MCF 10A (cell line): ENCODE measurements at regions of chr1 and their contacts with region 1.

Region 1: DNA sequence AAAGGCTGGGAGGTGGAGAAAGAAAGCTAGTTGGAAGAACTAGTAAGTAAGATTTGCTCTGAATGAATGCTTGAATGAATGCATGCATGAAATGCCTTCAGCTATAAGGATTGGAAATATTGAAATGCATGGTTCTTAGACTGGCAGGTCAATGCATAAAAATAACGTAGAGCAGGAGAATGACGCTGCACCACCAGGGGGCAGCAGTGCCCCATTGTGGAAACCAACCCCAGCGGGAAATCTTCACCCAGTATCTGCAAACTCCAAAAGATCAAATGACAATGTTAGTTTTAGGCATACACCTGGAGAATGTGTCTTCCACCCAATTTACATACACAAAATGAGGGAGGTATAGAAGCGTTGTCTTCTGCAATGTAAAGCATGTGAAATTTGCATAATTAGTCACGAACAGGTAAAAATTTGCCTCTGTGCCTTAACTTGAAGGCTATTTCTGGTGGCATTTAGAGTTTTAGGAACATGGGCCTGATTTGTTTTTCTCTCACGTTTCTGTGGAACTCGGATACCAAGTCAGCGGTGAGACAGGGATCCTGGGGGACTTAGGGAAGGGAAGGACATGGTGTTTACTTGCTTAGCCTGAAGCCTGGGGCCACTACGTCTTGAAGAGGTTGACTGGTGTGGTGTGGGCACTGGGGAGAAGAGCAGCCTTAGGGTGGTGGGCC is 78.6 kb downstream of the HHAT start:
- DNase-seq: peak; percentile 84
- H3K4me3 Mint-ChIP-seq: no peak overlapping the region
- H3K27ac Mint-ChIP-seq: no peak overlapping the region
- H3K4me1 Mint-ChIP-seq: no peaks in the 10 kb centered on the region
- H3K27me3 Mint-ChIP-seq: no peaks in the 10 kb centered on the region
- CTCF ChIP-seq: peak; percentile 100

Region 2: GRCh38 chr1:210117198-210117597 is 290.1 kb before region 1 on chr1:
- CTCF ChIA-PET with region 1: no interaction called
- POLR2A ChIA-PET with region 1: no interaction called
- intact Hi-C with region 1: no loop called
- DNase-seq: no peak
- H3K4me3 Mint-ChIP-seq: no peak overlapping the region
- H3K27ac Mint-ChIP-seq: no peak overlapping the region
- H3K4me1 Mint-ChIP-seq: no peaks in the 10 kb centered on the region
- H3K27me3 Mint-ChIP-seq: no peaks in the 10 kb centered on the region
- CTCF ChIP-seq: no peak

Region 3: GRCh38 chr1:210328746-210329503 is 78.4 kb before region 1 on chr1 and contains the start of gene HHAT:
- CTCF ChIA-PET with region 1: interaction called, 16 read pairs
- POLR2A ChIA-PET with region 1: interaction called, 3 read pairs
- intact Hi-C with region 1: no loop called
- DNase-seq: peak; percentile 95
- H3K4me3 Mint-ChIP-seq: peak within 1 kb of the TSS; percentile 81
- H3K27ac Mint-ChIP-seq: peak within 1 kb of the TSS; percentile 87
- H3K4me1 Mint-ChIP-seq: peaks cover 26% of the 10 kb centered on the region
- H3K27me3 Mint-ChIP-seq: no peaks in the 10 kb centered on the region
- CTCF ChIP-seq: no peak
- total RNA-seq, gene HHAT: 4.6 and 4.9 TPM in 2 replicates

Region 4: GRCh38 chr1:210342986-210343780 is 64.2 kb before region 1 on chr1:
- CTCF ChIA-PET with region 1: interaction called, 10 read pairs
- POLR2A ChIA-PET with region 1: no interaction called
- intact Hi-C with region 1: no loop called
- DNase-seq: peak; percentile 33
- H3K4me3 Mint-ChIP-seq: no peak overlapping the region
- H3K27ac Mint-ChIP-seq: no peak overlapping the region
- H3K4me1 Mint-ChIP-seq: no peaks in the 10 kb centered on the region
- H3K27me3 Mint-ChIP-seq: no peaks in the 10 kb centered on the region
- CTCF ChIP-seq: no peak

Region 5: GRCh38 chr1:210438928-210439809 is 31.8 kb after region 1 on chr1:
- CTCF ChIA-PET with region 1: interaction called, 12 read pairs
- POLR2A ChIA-PET with region 1: no interaction called
- intact Hi-C with region 1: no loop called
- DNase-seq: peak; percentile 62
- H3K4me3 Mint-ChIP-seq: no peak overlapping the region
- H3K27ac Mint-ChIP-seq: no peak overlapping the region
- H3K4me1 Mint-ChIP-seq: peaks cover 6% of the 10 kb centered on the region
- H3K27me3 Mint-ChIP-seq: no peaks in the 10 kb centered on the region
- CTCF ChIP-seq: no peak

Region 6: GRCh38 chr1:210711825-210712612 is 304.7 kb after region 1 on chr1:
- CTCF ChIA-PET with region 1: no interaction called
- POLR2A ChIA-PET with region 1: no interaction called
- intact Hi-C with region 1: no loop called
- DNase-seq: peak; percentile 39
- H3K4me3 Mint-ChIP-seq: no peak overlapping the region
- H3K27ac Mint-ChIP-seq: no peak overlapping the region
- H3K4me1 Mint-ChIP-seq: peaks cover 6% of the 10 kb centered on the region
- H3K27me3 Mint-ChIP-seq: no peaks in the 10 kb centered on the region
- CTCF ChIP-seq: peak; percentile 25

Region 7: DNA sequence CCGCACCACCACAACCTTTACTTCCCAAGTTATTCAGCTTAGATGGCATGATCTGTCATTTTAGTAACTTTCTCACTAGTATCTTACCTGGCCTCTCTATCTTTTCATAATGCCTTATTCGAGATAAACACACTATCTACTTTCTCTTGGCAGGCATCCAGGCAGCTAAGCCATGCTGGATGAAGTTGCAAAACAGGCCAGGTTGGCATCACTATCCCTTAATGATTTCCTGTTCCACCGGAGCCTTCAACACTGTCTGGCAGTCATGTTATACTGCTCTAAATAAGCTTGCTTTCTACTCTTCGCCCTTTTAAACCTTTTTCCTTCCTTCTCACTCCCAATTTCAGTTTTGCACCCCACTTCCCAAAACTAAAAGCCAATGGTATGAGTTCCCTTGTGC is 738.6 kb after region 1 on chr1:
- CTCF ChIA-PET with region 1: interaction called, 13 read pairs
- POLR2A ChIA-PET with region 1: no interaction called
- intact Hi-C with region 1: no loop called
- DNase-seq: peak; percentile 38
- H3K4me3 Mint-ChIP-seq: no peak overlapping the region
- H3K27ac Mint-ChIP-seq: no peak overlapping the region
- H3K4me1 Mint-ChIP-seq: peaks cover 6% of the 10 kb centered on the region
- H3K27me3 Mint-ChIP-seq: peaks cover 4% of the 10 kb centered on the region
- CTCF ChIP-seq: no peak

Region 8: GRCh38 chr1:211469938-211470529 is 1062.7 kb after region 1 on chr1:
- CTCF ChIA-PET with region 1: interaction called, 3 read pairs
- POLR2A ChIA-PET with region 1: no interaction called
- intact Hi-C with region 1: loop called (anchors 5 kb)
- DNase-seq: peak; percentile 92
- H3K4me3 Mint-ChIP-seq: no peak overlapping the region
- H3K27ac Mint-ChIP-seq: no peak overlapping the region
- H3K4me1 Mint-ChIP-seq: peaks cover 15% of the 10 kb centered on the region
- H3K27me3 Mint-ChIP-seq: no peaks in the 10 kb centered on the region
- CTCF ChIP-seq: peak; percentile 98